Activated T-helper 1 cell treated with anti-CD3 and anti-CD28 coated beads, Interleukin-12 subunit alpha, Interleukin-12 subunit beta, Interleukin-2, Interleukin-4 antibody, amounts not matched to agents 30 ng/mL and 10 ng/mL and 1 ng/mL, durations not matched to agents 14 hours and 24 hours and 36 hours (primary cell): ENCODE measurements at regions of chr17 and their contacts with region 1.

Region 1: DNA sequence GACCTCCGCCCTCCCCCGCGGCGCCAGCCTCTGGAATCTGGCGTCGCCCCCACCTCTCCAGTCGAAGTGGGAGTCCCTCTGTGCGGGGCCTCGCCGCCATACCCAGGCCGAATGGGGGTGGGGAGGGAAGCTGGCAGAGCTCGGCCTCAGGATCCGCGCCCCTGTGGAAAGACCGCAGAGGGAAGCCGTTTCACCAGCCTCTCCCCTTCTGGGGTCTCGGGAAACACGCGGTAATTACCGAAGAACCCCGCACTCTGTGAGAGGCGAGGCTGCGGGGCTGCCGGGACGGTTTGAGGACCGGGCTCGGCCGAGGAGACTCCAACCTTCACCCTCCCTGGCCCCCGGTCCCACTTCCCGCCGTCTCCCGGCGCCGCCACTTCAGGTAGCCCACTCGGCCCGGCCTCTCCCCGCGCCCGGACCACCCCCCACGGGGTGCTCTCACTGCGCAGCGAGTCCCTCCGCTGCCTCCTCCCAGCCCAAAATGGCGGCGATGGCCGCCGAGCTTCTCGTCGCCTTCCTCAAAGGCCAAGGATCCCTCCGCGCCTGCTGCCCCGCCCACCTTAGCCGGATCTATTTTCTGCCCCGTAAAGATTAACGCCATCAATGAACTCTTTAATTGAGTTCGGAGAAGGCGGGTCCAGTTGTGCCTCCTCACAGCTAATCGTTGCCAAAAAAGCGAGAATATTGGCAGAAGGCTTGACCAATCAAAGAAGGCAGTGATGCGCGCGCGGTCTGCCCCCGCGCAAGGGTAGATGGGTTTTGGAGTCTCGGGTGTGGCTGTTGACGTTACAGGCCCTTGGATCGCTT is 453 bp upstream of the HEXIM2 start:
- DNase-seq: peak; percentile 98
- H3K4me3 Mint-ChIP-seq: peak overlapping the region; percentile 98
- H3K27ac Mint-ChIP-seq: peak overlapping the region; percentile 98
- H3K4me1 Mint-ChIP-seq: peaks cover 32% of the 10 kb centered on the region
- H3K27me3 Mint-ChIP-seq: no peaks in the 10 kb centered on the region

Region 2: DNA sequence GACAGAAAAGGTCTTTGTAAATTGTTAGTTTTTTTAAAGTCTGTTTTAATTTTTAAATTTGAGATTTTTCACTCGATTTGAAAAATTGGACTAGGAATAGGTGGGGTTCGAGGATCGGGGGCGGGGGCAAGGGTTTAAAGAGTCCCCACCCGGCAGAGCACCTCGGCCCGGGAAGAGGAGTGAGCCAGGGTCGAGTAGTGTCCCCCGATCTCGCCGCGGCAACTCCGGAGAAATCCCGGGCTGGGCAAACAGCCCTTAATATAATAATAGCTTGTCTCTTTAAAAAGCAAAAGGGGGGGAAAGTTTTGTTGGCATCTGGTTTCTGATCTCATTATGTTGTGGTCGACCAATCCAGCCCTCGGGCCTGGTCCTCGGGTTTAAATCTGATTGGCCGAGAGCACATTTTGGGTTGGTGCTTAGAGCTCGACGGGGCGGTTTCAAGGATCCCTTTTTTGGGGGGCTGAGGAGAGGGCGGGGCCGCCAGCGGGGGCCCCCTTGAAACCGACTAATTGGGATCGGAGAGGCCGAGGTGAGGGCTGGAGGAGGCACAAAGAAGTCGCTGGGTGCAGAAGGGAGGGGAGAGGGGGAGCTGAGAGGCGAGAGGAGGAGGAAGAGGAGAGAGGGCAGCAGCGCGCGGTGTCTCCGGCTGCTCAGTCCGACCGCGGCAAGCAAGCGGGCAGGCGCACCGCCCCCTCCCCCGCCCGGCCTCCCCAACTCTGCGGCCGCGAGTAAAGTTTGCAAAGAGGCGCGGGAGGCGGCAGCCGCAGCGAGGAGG is 604.2 kb before region 1 on chr17 and contains the start of gene FZD2:
- intact Hi-C with region 1: no loop called
- DNase-seq: peak; percentile 18
- H3K4me3 Mint-ChIP-seq: peak within 1 kb of the TSS; percentile 87
- H3K27ac Mint-ChIP-seq: peak within 1 kb of the TSS; percentile 63
- H3K4me1 Mint-ChIP-seq: peaks cover 11% of the 10 kb centered on the region
- H3K27me3 Mint-ChIP-seq: peaks cover 67% of the 10 kb centered on the region
- total RNA-seq, gene FZD2: not detected in 2 replicates

Region 3: DNA sequence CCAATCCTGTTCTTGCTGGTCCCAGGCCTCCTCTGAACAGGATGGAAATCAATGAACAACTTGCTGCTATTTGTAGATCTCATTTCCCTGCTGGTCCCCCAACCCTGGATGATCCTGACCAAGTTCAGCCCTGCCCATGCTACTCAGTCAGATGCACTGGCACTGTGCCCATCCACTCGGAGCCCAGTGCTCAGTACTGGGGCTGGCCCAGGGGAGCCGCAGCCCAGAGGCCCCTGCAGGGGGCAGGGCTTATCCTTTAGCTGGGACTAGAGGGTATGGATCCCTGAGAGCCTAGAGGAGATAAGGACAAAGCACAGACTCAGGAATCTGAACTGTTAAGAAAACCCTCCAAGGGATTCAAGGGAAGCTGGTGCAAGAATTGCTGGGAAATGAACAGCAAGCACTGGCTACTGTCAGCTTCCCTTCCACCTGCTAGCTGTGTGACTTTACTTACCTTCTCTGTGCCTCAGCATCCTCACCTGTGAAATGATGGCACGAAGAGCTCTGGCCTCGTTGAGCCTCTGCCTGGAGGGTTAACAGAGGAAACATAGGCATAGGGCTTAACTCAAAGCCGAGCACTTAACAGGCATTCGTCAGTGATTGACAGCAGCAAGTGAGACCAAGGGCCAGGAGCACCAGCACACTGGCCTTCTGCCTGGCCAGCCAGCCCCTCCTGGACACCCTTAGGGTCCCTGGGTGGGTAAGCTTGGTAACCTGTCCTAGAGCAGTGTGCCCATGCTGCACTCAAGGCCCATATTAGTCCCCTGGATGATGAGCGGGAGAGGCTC is 163.3 kb before region 1 on chr17:
- intact Hi-C with region 1: no loop called
- DNase-seq: no peak
- H3K4me3 Mint-ChIP-seq: no peak overlapping the region
- H3K27ac Mint-ChIP-seq: no peak overlapping the region
- H3K4me1 Mint-ChIP-seq: no peaks in the 10 kb centered on the region
- H3K27me3 Mint-ChIP-seq: peaks cover 26% of the 10 kb centered on the region

Region 4: DNA sequence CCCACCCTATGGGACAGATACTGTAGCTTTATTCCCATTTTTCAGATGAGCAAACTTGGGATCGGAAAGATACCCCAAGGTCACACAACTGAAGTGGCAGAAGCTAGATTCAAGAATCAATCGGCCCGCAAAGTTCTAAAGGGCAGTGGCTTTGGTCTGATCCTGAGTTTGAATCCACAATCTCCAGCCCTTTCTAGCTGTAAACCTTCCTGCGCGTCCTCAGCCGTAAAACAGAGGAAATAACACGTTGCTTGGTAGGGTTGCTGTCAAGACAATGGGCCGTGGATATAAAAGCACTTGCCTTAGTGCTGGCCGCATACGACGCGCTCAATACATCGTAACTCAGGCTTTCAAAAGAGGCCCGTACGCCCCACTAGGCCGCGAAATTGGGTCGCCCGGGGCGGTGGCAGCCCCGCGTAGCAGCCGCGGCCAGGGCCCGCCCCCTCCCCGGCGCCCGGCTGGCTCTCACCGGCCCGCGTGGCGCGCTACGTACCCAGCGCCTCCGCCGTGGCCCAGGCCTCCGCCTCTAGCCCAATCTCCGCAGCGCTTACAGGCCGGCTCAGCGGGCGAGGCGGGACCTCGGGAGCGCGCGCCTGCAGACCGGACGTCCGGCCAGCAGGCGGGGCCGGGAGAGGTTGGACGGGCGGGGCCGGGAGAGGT is 110.0 kb before region 1 on chr17 and contains the start of gene DCAKD:
- intact Hi-C with region 1: loop called (anchors 1 kb)
- DNase-seq: peak; percentile 93
- H3K4me3 Mint-ChIP-seq: peak within 1 kb of the TSS; percentile 92
- H3K27ac Mint-ChIP-seq: peak within 1 kb of the TSS; percentile 94
- H3K4me1 Mint-ChIP-seq: peaks cover 47% of the 10 kb centered on the region
- H3K27me3 Mint-ChIP-seq: no peaks in the 10 kb centered on the region
- total RNA-seq, gene DCAKD: 24.0 and 24.9 TPM in 2 replicates

Region 5: DNA sequence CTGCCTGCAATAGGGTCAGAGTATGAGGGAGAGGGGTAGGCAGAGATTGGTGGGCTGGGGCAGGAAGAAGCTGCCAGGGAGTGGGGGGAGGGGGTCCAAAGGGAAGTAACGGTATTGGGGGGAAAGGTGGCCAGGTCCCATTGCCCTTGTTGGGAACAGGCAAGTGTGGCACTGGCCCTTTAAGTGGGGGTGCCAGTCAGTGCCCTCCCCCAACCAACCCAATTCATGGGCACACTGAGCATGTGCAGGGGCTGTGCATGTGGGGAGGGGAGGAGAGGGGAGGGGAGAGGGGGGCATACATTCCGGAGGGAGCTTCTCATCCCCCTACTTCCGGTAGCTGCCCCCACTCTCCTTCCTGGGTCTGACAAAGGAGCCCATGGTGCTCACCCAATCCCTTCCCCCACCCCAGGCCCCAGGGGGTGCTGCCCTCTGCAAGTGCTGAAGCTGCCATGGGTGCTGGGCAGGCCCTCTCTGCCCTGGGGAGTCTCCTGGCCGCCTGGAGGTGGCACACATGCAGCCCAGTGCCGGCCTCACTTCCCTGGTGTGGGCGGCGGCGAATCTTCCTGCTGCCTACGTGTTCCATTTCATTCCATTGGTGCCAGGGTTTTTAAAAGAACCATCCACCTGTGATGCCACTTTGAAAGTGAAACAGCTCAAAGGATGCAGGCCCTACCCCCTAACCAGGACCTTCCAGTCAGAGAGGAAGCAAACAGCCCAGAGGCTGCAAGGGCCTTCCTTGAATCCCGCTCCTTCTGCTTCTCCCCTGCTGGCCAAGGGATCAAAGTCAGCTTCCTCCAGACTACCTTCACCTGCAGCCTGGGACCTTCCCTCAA is 11.4 kb after region 1 on chr17:
- intact Hi-C with region 1: loop called (anchors 1 kb)
- DNase-seq: peak; percentile 28
- H3K4me3 Mint-ChIP-seq: peak overlapping the region; percentile 75
- H3K27ac Mint-ChIP-seq: peak overlapping the region; percentile 94
- H3K4me1 Mint-ChIP-seq: peaks cover 22% of the 10 kb centered on the region
- H3K27me3 Mint-ChIP-seq: no peaks in the 10 kb centered on the region

Region 6: GRCh38 chr17:45184144-45184543 is 22.9 kb after region 1 on chr17:
- intact Hi-C with region 1: no loop called
- DNase-seq: no peak
- H3K4me3 Mint-ChIP-seq: no peak overlapping the region
- H3K27ac Mint-ChIP-seq: no peak overlapping the region
- H3K4me1 Mint-ChIP-seq: no peaks in the 10 kb centered on the region
- H3K27me3 Mint-ChIP-seq: peaks cover 11% of the 10 kb centered on the region

Region 7: DNA sequence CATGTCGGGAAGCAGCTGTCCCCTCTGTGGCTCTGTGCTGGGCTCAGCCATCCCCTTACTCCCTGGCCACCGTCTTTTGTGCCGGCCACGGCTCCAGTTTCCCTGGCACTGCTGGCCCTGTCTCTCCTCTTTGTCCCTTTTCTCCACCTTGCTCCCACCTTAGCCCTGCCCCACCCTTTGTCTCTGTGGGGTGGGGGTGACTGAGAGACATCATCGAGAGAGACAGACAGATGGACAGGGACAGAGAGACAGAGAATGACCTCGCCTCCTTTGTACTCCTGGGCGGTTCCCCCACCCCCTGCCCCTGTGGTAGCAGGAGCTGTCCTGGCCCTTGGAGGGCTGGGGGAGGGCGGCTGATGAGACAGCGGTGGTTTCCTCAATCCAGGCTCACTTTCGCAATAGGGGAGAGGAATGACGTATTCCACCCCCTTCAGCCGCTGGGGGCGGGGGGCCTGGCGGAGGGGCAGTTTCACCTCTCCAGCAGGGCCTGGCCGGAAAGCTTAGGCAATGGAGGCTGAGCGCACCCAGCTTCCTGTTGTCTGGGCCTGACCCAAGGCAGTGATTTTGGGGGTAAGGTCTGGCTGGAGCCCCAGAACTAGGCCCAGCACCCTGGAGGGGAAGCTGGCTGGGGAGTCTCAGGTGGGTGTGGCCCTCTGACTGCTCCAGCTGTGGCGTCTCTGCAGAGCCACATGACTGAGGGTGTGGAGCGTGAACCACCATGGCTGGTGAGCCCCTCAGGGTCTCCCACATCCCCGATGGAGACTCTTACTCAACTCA is 67.7 kb after region 1 on chr17:
- intact Hi-C with region 1: loop called (anchors 1 kb)
- DNase-seq: peak; percentile 81
- H3K4me3 Mint-ChIP-seq: peak overlapping the region; percentile 99
- H3K27ac Mint-ChIP-seq: peak overlapping the region; percentile 97
- H3K4me1 Mint-ChIP-seq: peaks cover 94% of the 10 kb centered on the region
- H3K27me3 Mint-ChIP-seq: no peaks in the 10 kb centered on the region

Region 8: DNA sequence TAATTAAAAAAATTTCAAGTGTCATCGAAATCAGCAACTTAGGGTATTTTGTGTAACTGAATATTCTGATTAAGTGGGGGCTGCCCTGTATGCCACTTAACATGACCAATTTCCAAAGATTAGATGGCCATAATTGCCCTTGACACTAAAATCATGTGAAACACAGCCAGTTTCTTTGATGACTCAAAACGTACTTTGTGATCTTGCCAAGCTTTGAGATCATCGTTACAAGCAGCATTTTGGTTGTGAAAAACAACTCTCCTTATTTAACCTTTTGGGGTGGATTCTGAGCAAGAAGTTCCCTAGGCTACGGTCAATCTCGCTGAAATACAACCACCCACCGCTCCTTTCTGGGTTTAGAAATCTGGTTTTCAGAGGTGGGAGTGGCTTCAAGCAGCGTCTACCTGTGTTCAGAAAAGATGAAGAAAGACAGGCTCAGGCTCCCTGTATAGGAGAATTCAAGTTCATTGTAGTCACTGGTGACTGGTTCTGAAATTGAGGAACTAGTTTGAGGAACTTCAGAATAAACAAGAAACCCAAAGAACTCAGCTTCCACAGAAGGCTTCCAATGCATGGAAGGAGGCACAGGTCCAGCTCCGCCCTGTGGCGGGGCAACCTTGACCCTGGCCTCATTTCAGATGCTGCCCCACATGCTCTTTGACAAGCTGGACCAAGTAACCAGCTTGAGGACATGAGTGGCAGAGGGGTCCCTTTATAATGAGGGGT is 146.2 kb after region 1 on chr17:
- intact Hi-C with region 1: no loop called
- DNase-seq: peak; percentile 67
- H3K4me3 Mint-ChIP-seq: peak overlapping the region; percentile 47
- H3K27ac Mint-ChIP-seq: peak overlapping the region; percentile 89
- H3K4me1 Mint-ChIP-seq: peaks cover 88% of the 10 kb centered on the region
- H3K27me3 Mint-ChIP-seq: no peaks in the 10 kb centered on the region